Endothelial cell of umbilical vein (primary cell): ENCODE measurements at regions of chr7 and their contacts with region 1.

Region 1: GRCh38 chr7:41977151-41977651 is 259.8 kb downstream of the GLI3 start:
- DNase-seq: peak; percentile 65
- H3K4me3 ChIP-seq: no peak overlapping the region
- H3K27ac ChIP-seq: no peak overlapping the region
- H3K4me1 ChIP-seq: no peaks in the 10 kb centered on the region
- H3K27me3 ChIP-seq: no peaks in the 10 kb centered on the region
- CTCF ChIP-seq: peak; percentile 54 to 69
- POLR2A ChIP-seq: no peak

Region 2: DNA sequence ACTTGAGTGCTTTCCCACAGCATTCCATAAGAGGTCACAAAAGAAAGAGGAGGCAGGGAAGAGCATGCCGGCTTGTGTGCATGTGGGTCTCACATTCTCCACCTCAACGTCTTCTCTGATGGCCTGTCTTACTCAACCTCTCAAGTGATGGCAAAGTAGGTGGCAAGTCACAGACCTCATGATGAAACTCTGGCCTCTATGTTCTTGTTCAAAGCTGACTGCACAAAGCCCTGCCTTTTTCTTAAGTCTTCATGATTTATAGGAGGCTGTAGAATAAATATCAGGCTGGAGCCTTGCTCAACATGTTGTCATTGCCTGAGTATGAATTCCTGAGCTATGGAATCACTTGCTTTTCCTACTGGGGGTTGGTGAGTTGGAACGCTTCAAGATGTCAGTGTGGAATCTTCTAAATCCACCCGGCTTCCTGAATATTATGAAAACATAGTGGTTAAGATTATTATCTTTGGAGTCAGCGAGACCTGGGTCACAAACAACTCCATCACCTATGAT is 60.7 kb before region 1 on chr7:
- CTCF ChIA-PET with region 1: no interaction called
- POLR2A ChIA-PET with region 1: no interaction called
- dilution Hi-C with region 1: no loop called
- intact Hi-C with region 1: no loop called
- DNase-seq: peak; percentile 86
- H3K4me3 ChIP-seq: peak overlapping the region in 1 of 3 experiments; percentile 4
- H3K27ac ChIP-seq: peak overlapping the region; percentile 84
- H3K4me1 ChIP-seq: peaks cover 24% of the 10 kb centered on the region
- H3K27me3 ChIP-seq: no peaks in the 10 kb centered on the region
- CTCF ChIP-seq: no peak
- POLR2A ChIP-seq: peak; percentile 31

Region 3: GRCh38 chr7:41955893-41956675 is 21.1 kb before region 1 on chr7:
- CTCF ChIA-PET with region 1: interaction called, 18 read pairs
- POLR2A ChIA-PET with region 1: no interaction called
- dilution Hi-C with region 1: no loop called
- intact Hi-C with region 1: no loop called
- DNase-seq: peak; percentile 98
- H3K4me3 ChIP-seq: no peak overlapping the region
- H3K27ac ChIP-seq: no peak overlapping the region
- H3K4me1 ChIP-seq: peaks cover 11% of the 10 kb centered on the region
- H3K27me3 ChIP-seq: peaks cover 0 to under 1% of the 10 kb centered on the region in 2 experiments
- CTCF ChIP-seq: no peak
- POLR2A ChIP-seq: no peak

Region 4: DNA sequence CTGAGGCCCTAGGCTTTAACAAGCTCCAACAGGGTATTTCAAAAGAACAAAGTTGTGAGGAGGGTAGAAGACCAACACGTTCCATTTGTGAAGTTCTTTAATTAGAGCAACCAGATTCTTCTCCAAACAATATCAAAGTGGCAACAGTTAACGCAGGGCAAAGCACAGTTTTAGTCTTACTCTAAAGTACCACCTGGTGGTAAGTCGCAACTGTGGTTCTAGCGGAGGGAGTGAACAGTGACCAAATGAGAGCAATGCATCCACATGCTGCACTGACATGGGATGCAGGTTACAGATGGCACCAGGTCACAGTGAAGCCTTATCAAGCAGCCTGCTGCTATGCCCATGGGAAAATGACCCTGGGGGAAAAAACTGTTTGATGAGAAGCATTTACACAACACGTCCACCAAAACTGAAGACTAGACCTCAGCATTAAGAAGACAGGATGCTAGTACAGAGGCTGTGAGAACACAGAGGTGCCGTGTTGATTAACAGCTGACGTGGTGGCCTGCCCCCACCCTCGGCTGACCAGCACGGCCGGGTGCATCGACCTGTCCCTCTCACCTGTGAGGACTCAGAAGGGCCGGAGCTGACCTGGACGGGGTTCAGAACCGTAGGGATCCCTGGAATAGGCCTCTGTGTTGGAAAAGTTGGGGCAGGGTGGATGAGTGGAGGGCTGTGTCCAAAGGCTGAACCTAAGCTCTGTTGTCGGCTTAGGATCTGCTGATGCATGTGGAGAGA is 48.6 kb after region 1 on chr7:
- CTCF ChIA-PET with region 1: interaction called, 10 read pairs
- POLR2A ChIA-PET with region 1: no interaction called
- dilution Hi-C with region 1: no loop called
- intact Hi-C with region 1: no loop called
- DNase-seq: no peak
- H3K4me3 ChIP-seq: no peak overlapping the region
- H3K27ac ChIP-seq: no peak overlapping the region
- H3K4me1 ChIP-seq: no peaks in the 10 kb centered on the region
- H3K27me3 ChIP-seq: no peaks in the 10 kb centered on the region
- CTCF ChIP-seq: no peak
- POLR2A ChIP-seq: no peak

Region 5: GRCh38 chr7:42311195-42311594 is 334.0 kb after region 1 on chr7:
- CTCF ChIA-PET with region 1: interaction called, 11 read pairs
- POLR2A ChIA-PET with region 1: no interaction called
- dilution Hi-C with region 1: no loop called
- intact Hi-C with region 1: loop called (anchors 2 kb)
- DNase-seq: no peak
- H3K4me3 ChIP-seq: no peak overlapping the region
- H3K27ac ChIP-seq: no peak overlapping the region
- H3K4me1 ChIP-seq: peaks cover 2% of the 10 kb centered on the region
- H3K27me3 ChIP-seq: peaks cover 6 to 31% of the 10 kb centered on the region in 2 experiments
- CTCF ChIP-seq: no peak
- POLR2A ChIP-seq: no peak

Region 6: GRCh38 chr7:42690794-42691639 is 713.8 kb after region 1 on chr7:
- CTCF ChIA-PET with region 1: interaction called, 21 read pairs
- POLR2A ChIA-PET with region 1: no interaction called
- dilution Hi-C with region 1: no loop called
- intact Hi-C with region 1: loop called (anchors 2 kb)
- DNase-seq: peak; percentile 32
- H3K4me3 ChIP-seq: no peak overlapping the region
- H3K27ac ChIP-seq: no peak overlapping the region
- H3K4me1 ChIP-seq: no peaks in the 10 kb centered on the region
- H3K27me3 ChIP-seq: no peaks in the 10 kb centered on the region
- CTCF ChIP-seq: peak; percentile 25 to 43
- POLR2A ChIP-seq: no peak

Region 7: GRCh38 chr7:42843205-42843800 is 866.1 kb after region 1 on chr7:
- CTCF ChIA-PET with region 1: interaction called, 40 read pairs
- POLR2A ChIA-PET with region 1: no interaction called
- dilution Hi-C with region 1: no loop called
- intact Hi-C with region 1: loop called (anchors 1 kb)
- DNase-seq: peak; percentile 53
- H3K4me3 ChIP-seq: no peak overlapping the region
- H3K27ac ChIP-seq: no peak overlapping the region
- H3K4me1 ChIP-seq: no peaks in the 10 kb centered on the region
- H3K27me3 ChIP-seq: peaks cover 15 to 17% of the 10 kb centered on the region in 2 experiments
- CTCF ChIP-seq: peak; percentile 50 to 61
- POLR2A ChIP-seq: no peak